HEK293 (cell line): ENCODE measurements at regions of chr7 and their contacts with region 1.

Region 1: GRCh38 chr7:94449148-94449725 is 54.5 kb downstream of the COL1A2 start:
- H3K4me3 ChIP-seq: no peak overlapping the region
- H3K27ac ChIP-seq: no peak overlapping the region
- H3K4me1 ChIP-seq: peaks cover 6% of the 10 kb centered on the region; the same call in 1 of the 2 replicates
- CTCF ChIP-seq: no peak

Region 2: DNA sequence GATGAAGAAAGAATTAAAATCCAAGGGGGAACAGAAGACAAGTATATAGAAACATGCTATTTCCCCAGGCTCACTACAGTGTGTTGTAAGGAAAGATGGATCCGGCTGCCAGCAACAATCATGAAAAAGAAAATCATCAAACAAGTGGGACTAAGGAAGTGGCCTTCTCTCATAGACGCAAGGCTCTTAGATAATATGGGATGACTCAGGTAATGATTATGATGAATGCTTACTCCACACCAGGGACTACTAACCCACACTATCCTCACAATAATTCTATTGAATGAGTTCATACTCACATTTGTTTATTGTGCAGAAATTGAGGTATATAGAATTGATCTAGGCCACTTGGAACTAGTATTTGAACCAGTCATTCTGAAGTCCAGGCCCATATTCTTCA is 333.9 kb before region 1 on chr7:
- CTCF ChIA-PET with region 1: no interaction called
- POLR2A ChIA-PET with region 1: no interaction called
- H3K4me3 ChIP-seq: no peak overlapping the region
- H3K27ac ChIP-seq: no peak overlapping the region
- H3K4me1 ChIP-seq: no peaks in the 10 kb centered on the region
- CTCF ChIP-seq: no peak

Region 3: DNA sequence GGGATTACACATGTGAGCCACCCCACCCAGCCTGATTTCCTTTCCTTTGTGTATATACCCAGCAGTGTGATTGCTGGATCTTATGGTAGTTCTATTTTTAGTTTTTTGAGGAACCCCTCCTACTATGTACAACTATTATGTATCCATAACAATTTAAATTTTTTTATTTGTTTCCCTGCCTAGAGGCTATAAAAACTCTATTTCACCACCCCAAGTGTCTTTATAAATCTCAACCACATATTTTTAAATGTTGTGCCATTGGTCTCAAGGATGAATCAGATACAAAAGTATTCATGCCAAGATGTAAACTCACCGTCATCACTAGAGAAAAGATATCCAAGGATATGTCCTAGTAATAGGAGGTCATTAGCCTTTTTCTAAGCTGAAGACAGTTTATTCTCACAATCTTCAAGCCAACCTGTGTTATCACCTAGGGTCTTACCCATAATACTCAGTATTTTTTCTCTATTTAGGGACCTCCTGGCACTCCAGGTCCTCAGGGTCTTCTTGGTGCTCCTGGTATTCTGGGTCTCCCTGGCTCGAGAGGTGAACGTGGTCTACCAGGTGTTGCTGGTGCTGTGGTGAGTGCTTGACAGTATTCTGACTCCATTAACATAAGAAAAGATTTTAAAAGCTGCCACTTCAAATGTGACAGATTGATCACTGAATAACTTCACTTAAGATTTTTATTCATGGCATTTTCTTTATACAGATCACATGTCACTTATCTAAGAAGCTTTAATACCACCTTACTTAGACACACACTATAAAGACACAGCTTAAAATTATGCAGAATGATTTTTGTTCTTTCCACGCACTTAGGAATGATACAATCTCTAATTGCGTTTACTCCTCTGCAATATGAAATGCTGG is 25.1 kb before region 1 on chr7:
- CTCF ChIA-PET with region 1: no interaction called
- POLR2A ChIA-PET with region 1: no interaction called
- H3K4me3 ChIP-seq: no peak overlapping the region
- H3K27ac ChIP-seq: no peak overlapping the region
- H3K4me1 ChIP-seq: no peaks in the 10 kb centered on the region
- CTCF ChIP-seq: no peak

Region 4: DNA sequence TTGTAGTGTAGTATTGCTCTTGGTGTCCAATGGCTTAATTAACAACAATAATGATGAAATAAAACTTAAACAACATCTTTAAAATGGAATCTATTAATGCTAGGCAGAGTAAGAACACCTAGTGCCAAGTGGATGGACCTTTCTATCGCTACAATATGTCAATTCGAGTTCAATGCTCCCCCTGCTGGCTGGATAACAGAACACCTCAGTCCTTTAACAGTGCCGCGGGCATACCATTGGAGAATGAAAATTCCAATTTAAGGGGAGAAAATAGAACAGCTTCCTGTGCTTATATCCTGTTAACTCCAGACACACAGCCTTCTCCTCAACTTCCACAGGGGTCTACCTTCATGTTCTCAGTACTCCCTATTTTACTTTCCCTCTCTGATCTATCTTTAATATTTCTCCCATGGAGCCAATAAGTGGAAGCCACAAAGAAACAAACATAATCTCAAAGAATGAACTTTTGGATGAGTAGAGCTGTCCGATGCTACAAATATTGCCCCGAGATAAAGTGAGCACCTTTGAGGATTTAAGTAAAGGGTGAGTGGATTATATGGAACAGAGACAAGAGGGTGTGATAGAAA is 13.1 kb before region 1 on chr7:
- CTCF ChIA-PET with region 1: interaction called, 18 read pairs
- POLR2A ChIA-PET with region 1: no interaction called
- H3K4me3 ChIP-seq: no peak overlapping the region
- H3K27ac ChIP-seq: no peak overlapping the region
- H3K4me1 ChIP-seq: no peaks in the 10 kb centered on the region
- CTCF ChIP-seq: peak; percentile 21; the same call in 1 of the 2 replicates

Region 5: DNA sequence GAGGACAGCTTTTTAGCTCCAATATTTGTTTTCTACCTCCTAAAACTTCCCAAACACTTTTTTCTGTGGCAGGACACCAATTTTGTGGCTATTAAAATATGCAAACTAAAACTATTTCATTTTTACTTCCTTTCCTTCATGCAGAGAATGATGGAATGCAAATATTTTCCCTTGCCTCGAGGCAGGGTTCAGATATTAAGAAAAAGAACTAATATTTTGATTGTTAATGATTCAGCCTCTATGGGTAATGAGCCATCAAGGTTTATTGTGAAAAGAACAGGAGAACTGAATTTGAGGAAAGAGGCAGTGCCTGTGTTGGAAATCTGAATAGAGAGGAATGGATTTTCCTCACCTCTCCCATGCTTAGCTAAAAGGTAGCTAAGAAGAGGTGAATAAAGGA is 17.3 kb after region 1 on chr7:
- CTCF ChIA-PET with region 1: interaction called, 11 read pairs
- POLR2A ChIA-PET with region 1: no interaction called
- H3K4me3 ChIP-seq: no peak overlapping the region
- H3K27ac ChIP-seq: no peak overlapping the region
- H3K4me1 ChIP-seq: no peaks in the 10 kb centered on the region
- CTCF ChIP-seq: no peak

Region 6: GRCh38 chr7:95200741-95201140 is 751.5 kb after region 1 on chr7:
- CTCF ChIA-PET with region 1: interaction called, 14 read pairs
- POLR2A ChIA-PET with region 1: no interaction called
- H3K4me3 ChIP-seq: no peak overlapping the region
- H3K27ac ChIP-seq: no peak overlapping the region
- H3K4me1 ChIP-seq: peaks cover 3% of the 10 kb centered on the region; the same call in 1 of the 2 replicates
- CTCF ChIP-seq: no peak

Region 7: GRCh38 chr7:95476904-95477594 is 1027.8 kb after region 1 on chr7:
- CTCF ChIA-PET with region 1: interaction called, 28 read pairs
- POLR2A ChIA-PET with region 1: no interaction called
- H3K4me3 ChIP-seq: no peak overlapping the region
- H3K27ac ChIP-seq: no peak overlapping the region
- H3K4me1 ChIP-seq: no peaks in the 10 kb centered on the region
- CTCF ChIP-seq: peak; percentile 72; the same call in 1 of the 2 replicates